HEK293T (cell line): ENCODE measurements at regions of chr2 and their contacts with region 1.

Region 1: GRCh38 chr2:219968685-219969345 is 341.4 kb downstream of the SLC4A3 start:
- DNase-seq: no peak

Region 2: DNA sequence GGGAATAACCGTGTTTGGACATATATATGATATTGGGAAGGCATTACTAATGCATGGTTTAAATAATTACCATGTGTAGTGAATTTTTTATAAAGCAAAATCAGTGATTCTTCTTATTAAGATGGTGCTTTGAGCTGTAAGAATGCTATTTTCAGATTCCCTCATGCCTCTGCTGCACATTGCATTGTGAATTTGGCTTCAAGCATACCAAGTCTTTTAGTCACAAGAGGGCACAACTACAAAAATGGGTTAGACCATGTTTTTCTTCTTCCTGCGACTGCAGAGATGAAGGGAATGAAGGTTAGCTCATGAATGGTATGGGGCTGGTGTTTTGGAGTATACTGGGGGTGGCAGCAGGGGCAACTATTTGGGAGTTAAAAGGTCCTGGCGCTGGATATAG is 21.2 kb before region 1 on chr2:
- CTCF ChIA-PET with region 1: no interaction called
- POLR2A ChIA-PET with region 1: no interaction called
- DNase-seq: no peak

Region 3: DNA sequence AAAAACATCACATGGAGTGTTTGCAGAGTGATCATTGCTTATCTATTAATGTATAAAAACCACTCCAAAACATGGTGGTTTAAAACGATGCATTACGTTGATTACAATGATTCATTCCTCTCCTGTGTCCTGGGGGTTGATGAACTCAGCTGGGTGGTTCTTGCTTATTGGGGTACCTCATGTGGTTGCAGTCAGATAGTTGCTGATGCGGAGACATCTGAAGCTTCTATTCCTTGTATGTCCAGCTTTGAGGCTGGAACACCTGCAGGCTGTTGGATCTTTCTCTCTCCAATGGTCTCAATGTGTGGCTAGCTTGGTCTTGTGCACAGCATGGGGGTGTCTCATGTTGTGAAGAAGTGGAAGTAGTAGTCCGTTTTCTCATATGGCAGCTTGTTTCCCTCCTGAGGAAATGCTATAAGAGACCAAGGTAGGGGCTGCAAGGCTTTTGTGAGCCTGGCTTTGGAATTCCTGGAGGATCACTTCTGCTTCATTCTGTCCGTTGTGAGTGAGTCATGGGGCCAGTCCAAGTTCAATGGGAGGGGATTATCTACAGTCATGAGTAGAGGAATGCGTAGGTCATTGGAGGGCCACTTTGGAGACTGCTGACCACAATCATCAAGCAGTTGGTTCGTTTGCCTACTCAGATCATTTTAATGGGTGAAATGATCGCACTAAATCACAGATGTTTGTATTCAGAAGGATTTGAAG is 259.6 kb after region 1 on chr2:
- CTCF ChIA-PET with region 1: no interaction called
- POLR2A ChIA-PET with region 1: no interaction called
- DNase-seq: peak; percentile 6

Region 4: DNA sequence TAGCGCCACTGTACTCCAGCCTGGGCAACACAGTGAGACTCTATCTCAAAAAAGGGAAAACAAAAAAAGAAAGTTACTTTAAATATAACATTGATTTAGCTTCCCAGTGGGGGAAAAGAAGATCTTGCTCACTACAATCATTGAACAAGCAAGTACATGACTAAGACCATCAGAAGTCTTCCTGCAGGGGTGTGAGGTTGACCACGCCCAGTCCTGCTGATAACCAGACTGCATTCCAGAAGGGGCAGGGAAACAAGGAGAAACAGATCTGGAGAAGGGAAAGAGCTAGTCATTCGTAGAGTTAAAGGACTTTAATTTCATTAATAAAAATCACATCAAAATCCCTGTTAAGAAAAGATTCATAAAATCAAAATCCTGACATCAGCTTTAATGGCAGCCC is 1525.7 kb after region 1 on chr2:
- CTCF ChIA-PET with region 1: interaction called, 11 read pairs
- POLR2A ChIA-PET with region 1: no interaction called
- DNase-seq: no peak